Endothelial cell of umbilical vein (primary cell): ENCODE measurements at regions of chr15 and their contacts with region 1.

Region 1: DNA sequence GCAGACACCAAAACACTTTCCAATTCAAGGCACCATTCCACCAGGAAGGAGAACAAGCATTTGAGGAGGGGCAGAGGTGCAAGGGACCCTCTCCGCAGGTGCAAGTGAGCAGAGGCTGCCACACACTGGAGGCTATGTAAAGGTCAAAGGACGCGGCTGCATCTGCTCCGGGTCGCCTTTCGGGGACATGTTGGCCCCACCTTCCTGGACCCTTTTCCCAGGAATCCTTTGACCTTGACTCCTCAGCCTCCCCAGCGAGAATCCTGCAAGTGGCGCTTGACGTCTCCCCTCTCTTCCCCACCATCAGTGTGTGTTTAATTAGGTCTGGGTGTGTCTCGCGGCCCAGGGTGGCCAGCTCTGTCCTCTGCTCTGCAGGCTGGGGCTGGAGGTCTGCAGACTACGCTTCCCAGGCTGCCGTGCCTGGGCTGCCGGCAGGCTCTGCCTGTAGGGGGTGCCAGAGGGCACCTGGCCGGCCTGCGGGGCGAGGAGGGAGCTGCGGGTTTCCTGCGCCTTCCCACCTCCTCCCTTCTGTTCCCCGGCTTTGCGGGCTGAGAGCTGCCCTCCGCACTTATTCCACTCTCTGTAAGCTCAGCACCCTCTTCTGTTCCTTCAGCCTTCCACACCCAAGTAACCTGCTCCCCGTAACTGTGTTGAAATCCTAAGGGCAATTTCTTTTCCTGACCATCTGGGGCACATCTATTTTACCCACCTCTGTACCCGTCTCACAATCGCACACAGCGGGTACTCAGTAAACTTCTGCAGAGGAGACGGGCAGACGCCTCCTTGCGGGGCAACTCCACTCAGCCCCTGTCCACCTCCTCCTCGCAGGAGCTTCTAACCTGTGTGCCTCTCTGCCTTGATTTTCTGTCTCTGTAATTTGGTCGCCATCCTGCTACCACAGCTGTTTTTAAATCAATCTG is 129.8 kb downstream of the NSMCE3 start:
- DNase-seq: peak; percentile 33
- H3K4me3 ChIP-seq: no peak overlapping the region
- H3K27ac ChIP-seq: no peak overlapping the region
- H3K4me1 ChIP-seq: no peaks in the 10 kb centered on the region
- H3K27me3 ChIP-seq: peaks cover 0 to 3% of the 10 kb centered on the region in 2 experiments
- CTCF ChIP-seq: peak; percentile 86 to 96
- POLR2A ChIP-seq: no peak

Region 2: GRCh38 chr15:29115093-29115991 is 24.5 kb before region 1 on chr15:
- CTCF ChIA-PET with region 1: interaction called, 18 read pairs
- POLR2A ChIA-PET with region 1: no interaction called
- dilution Hi-C with region 1: no loop called
- intact Hi-C with region 1: no loop called
- DNase-seq: peak; percentile 17
- H3K4me3 ChIP-seq: peak overlapping the region in 2 of 3 experiments; percentile 3 to 34
- H3K27ac ChIP-seq: no peak overlapping the region
- H3K4me1 ChIP-seq: no peaks in the 10 kb centered on the region
- H3K27me3 ChIP-seq: no peaks in the 10 kb centered on the region
- CTCF ChIP-seq: peak; percentile 21 to 78
- POLR2A ChIP-seq: no peak

Region 3: GRCh38 chr15:29269485-29270168 is 129.8 kb after region 1 on chr15 and contains the start of gene NSMCE3:
- CTCF ChIA-PET with region 1: interaction called, 6 read pairs
- POLR2A ChIA-PET with region 1: no interaction called
- dilution Hi-C with region 1: no loop called
- intact Hi-C with region 1: loop called (anchors 5 kb)
- DNase-seq: peak; percentile 90
- H3K4me3 ChIP-seq: peak within 1 kb of the TSS; percentile 52 to 87 (median 55)
- H3K27ac ChIP-seq: peak within 1 kb of the TSS; percentile 71
- H3K4me1 ChIP-seq: peaks cover 18% of the 10 kb centered on the region
- H3K27me3 ChIP-seq: peaks cover 0 to 3% of the 10 kb centered on the region in 2 experiments
- CTCF ChIP-seq: no peak
- POLR2A ChIP-seq: peak; percentile 80
- total RNA-seq, gene NSMCE3: 5.8 TPM in 2 replicates